ENCODE measurements at regions of chr12 and their contacts with region 1.

Region 1: DNA sequence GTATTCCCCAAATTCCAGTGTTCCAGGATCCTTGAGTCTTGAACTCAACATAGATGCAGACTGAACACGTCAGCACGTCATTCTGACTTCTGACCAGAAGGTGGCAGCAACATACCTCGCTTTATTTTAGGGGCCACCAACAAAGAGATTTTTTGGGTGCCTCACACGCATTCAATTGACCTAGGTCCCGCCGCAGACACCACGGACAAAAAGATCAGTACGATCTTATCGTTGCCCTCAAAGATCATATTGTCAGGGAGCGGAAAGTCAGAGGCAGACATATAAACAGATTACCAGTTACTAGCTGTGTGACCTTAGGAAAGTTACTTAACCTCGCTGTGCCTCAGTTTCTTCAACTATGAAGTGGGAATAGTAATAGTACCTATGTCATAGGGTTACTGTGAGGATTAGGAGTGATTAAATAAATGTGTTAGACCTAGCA is 6.5 kb upstream of the PRPH start:
- DNase-seq: no peak
- ATAC-seq: peak; percentile 62

Region 2: DNA sequence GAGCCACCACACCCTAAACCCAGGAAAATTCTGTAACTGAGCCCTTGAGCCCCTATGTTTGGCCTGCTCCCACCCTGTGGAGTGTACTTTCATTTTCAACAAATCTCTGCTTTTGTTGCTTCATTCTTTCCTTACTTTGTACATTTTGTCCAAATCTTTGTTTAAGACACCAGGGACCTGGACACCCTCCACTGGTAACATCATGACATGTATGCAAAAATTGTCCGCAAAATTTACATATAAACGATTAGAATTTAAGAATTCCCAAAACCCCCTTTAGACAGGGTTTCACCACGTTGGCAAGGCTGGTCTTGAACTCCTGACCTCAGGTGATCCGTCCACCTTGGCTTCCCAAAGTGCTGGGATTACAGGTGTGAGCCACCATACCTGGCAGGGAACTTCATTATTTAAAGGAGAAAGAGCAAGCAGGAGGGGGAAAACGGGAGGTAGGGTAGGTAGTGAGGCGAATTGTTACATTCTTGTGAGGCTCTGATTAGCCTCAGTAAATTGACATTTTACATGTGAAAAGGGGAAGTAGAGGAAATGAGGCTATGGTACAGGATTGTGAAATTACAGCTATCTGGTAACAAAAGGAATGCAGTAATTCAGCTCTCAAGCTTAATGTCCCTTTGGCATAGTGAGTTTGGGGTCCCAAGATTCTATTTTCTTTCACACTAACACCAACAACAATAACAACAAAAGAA is 127.2 kb before region 1 on chr12:
- intact Hi-C with region 1: no loop called
- DNase-seq: no peak
- ATAC-seq: no peak

Region 3: DNA sequence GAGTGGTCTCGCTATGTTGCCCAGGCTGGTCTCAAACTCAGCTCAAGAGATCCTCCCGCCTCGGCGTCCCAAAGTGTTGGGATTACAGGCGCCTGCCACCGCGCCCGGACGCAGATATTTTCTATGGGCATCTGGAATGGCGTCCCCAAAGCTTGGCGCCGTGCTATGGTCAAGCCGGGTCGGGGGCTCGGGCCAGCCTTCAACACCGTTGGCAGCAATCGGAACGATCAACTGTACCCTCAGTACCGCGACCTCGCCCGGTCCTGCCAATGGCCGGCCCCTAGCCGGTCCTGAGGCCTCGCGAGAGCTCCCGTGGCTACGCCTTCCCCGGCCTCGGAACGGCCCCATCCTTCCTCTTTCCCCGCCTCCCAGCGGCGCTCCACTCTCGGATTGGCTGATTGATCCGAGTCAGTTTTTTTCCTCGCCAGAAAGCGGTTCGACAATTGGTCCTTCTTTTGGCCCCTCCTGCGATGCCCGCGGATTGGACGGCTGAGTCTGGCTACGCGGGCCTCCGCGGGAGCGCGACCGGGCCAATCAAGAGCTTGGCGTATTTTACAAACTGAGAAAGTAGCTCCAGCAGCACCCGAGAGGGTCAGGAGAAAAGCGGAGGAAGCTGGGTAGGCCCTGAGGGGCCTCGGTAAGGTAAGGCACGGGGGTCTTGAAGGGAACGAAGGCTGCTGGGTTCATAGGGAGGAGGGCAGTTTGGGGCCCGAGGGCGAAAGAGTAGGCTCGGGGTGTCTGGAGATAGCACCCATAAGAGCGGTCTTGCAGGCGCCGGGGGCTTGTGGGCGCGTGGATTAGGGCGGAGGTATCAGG is 34.5 kb after region 1 on chr12 and contains the start of gene TROAP:
- intact Hi-C with region 1: no loop called
- DNase-seq: peak; percentile 98
- ATAC-seq: peak; percentile 100
- total RNA-seq, gene TROAP: 0.67 TPM

Region 4: GRCh38 chr12:49342066-49342913 is 53.9 kb after region 1 on chr12:
- intact Hi-C with region 1: loop called (anchors 5 kb)
- DNase-seq: peak; percentile 83
- ATAC-seq: peak; percentile 63